Pancreas (tissue), 10 donors: ENCODE measurements at regions of chr4 and their contacts with region 1.

Region 1: GRCh38 chr4:184263910-184264732 is 46.4 kb upstream of the ENPP6 start:
- DNase-seq: peak; percentile 81 to 95 (median 90)
- ATAC-seq: peak; percentile 87 to 96 (median 94)
- H3K4me3 ChIP-seq: no peak overlapping the region
- H3K27ac ChIP-seq: no peak overlapping the region
- H3K4me1 ChIP-seq: no peaks in the 10 kb centered on the region
- H3K27me3 ChIP-seq: no peaks in the 10 kb centered on the region
- CTCF ChIP-seq: peak; percentile 88 to 95 (median 92)

Region 2: DNA sequence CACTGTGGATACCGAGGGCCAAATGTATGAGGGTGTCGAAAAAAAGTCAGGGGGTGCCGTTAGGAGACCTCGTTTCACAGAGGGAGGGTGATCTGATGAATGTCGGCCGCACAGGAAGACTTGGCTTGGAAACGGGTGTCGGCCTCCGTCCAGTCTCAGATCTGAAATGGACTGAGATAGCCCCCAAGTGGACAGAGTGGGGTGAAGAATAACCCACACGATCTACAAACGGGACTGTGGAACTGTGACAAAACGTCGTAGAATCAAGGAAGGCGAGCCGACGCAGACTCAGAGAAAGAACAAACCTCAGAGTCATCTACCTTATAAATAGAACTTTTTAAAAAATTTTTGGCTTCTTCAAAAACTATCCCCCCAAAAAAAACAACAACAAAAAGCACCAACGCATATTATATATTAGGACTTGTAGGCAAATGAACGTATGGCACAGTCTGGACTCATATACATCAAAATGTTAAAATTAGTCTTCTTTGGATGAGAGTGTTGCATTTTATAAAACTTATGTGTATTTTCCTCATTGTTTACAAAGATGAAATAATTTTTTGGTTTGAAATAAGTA is 274.0 kb after region 1 on chr4:
- intact Hi-C with region 1: loop called in 1 of 3 experiments (anchors 5 kb)
- DNase-seq: peak; percentile 74 to 87 (median 84)
- ATAC-seq: peak; percentile 83 to 95 (median 90)
- H3K4me3 ChIP-seq: peak overlapping the region; percentile 19 to 71 (median 48)
- H3K27ac ChIP-seq: peak overlapping the region; percentile 77 to 96 (median 91)
- H3K4me1 ChIP-seq: peaks cover 0 to 19% (median 17%) of the 10 kb centered on the region in 3 donors
- H3K27me3 ChIP-seq: no peaks in the 10 kb centered on the region
- CTCF ChIP-seq: peak; percentile 31 to 52 (median 45)